WTC11 (cell line): ENCODE measurements at regions of chr1 and their contacts with region 1.

Region 1: GRCh38 chr1:203117611-203118575 is 9.6 kb upstream of the ADORA1 start:
- DNase-seq: peak; percentile 95
- ATAC-seq: peak; percentile 100
- H3K4me3 Mint-ChIP-seq: peak overlapping the region; percentile 47
- H3K27ac Mint-ChIP-seq: no peak overlapping the region
- H3K4me1 Mint-ChIP-seq: no peaks in the 10 kb centered on the region; the same call in 1 of the 2 replicates
- H3K27me3 Mint-ChIP-seq: peaks cover 17% of the 10 kb centered on the region
- CTCF ChIP-seq: peak; percentile 66

Region 2: GRCh38 chr1:203026031-203026989 is 91.6 kb before region 1 on chr1 and contains the start of gene PPFIA4:
- CTCF ChIA-PET with region 1: interaction called, 10 read pairs
- POLR2A ChIA-PET with region 1: no interaction called
- DNase-seq: peak; percentile 88
- ATAC-seq: peak; percentile 82
- H3K4me3 Mint-ChIP-seq: peak within 1 kb of the TSS; percentile 77
- H3K27ac Mint-ChIP-seq: no peak within 1 kb of the TSS
- H3K4me1 Mint-ChIP-seq: peaks cover 15% of the 10 kb centered on the region
- H3K27me3 Mint-ChIP-seq: peaks cover 29% of the 10 kb centered on the region
- CTCF ChIP-seq: no peak
- total RNA-seq, gene PPFIA4: 21.1 to 24.9 TPM (median 22.7 TPM) in 3 replicates

Region 3: GRCh38 chr1:203084588-203085502 is 33.0 kb before region 1 on chr1:
- CTCF ChIA-PET with region 1: interaction called, 60 read pairs
- POLR2A ChIA-PET with region 1: no interaction called
- DNase-seq: peak; percentile 84
- ATAC-seq: peak; percentile 59
- H3K4me3 Mint-ChIP-seq: no peak overlapping the region
- H3K27ac Mint-ChIP-seq: no peak overlapping the region
- H3K4me1 Mint-ChIP-seq: peaks cover 34% of the 10 kb centered on the region
- H3K27me3 Mint-ChIP-seq: no peaks in the 10 kb centered on the region; the same call in 1 of the 2 replicates
- CTCF ChIP-seq: peak; percentile 88

Region 4: GRCh38 chr1:203148125-203148524 is 30.2 kb after region 1 on chr1:
- CTCF ChIA-PET with region 1: interaction called, 37 read pairs
- POLR2A ChIA-PET with region 1: no interaction called
- DNase-seq: peak; percentile 44
- ATAC-seq: peak; percentile 50
- H3K4me3 Mint-ChIP-seq: no peak overlapping the region
- H3K27ac Mint-ChIP-seq: no peak overlapping the region
- H3K4me1 Mint-ChIP-seq: peaks cover 87% of the 10 kb centered on the region
- H3K27me3 Mint-ChIP-seq: no peaks in the 10 kb centered on the region
- CTCF ChIP-seq: no peak

Region 5: DNA sequence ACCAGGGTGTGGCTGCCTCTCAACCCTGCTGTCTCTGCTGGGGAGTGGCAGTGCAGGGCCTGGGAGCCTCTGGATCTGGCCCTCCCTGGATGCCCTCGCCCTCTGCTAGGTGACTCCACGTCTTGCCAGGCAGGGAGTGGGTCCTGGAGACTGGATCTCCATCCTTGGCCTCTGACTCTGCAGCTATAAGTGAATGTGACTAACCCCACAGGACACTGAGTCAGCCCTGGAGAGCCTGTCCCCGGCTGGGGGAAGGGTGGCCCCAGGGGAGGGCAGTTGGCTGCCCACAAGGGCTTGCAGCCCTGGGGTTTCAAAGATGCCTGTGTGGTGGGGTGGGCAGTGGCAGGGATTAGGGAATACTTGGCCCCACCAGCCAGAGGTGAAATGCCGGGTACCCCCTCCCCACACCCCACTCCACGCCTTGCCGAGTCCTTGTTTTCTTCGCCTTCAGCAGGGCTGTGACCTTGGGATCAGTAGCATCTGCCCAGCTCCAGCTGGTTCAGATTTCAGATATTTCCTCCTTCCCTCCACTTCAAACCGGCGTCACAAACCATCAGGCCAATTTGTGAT is 59.7 kb after region 1 on chr1:
- CTCF ChIA-PET with region 1: interaction called, 110 read pairs
- POLR2A ChIA-PET with region 1: no interaction called
- DNase-seq: no peak
- ATAC-seq: no peak
- H3K4me3 Mint-ChIP-seq: no peak overlapping the region
- H3K27ac Mint-ChIP-seq: no peak overlapping the region
- H3K4me1 Mint-ChIP-seq: peaks cover 21% of the 10 kb centered on the region
- H3K27me3 Mint-ChIP-seq: no peaks in the 10 kb centered on the region
- CTCF ChIP-seq: no peak

Region 6: GRCh38 chr1:203273206-203273868 is 155.4 kb after region 1 on chr1:
- CTCF ChIA-PET with region 1: interaction called, 146 read pairs
- POLR2A ChIA-PET with region 1: interaction called, 3 read pairs
- DNase-seq: peak; percentile 90
- ATAC-seq: peak; percentile 70
- H3K4me3 Mint-ChIP-seq: peak overlapping the region; percentile 59
- H3K27ac Mint-ChIP-seq: no peak overlapping the region
- H3K4me1 Mint-ChIP-seq: peaks cover 13% of the 10 kb centered on the region
- H3K27me3 Mint-ChIP-seq: peaks cover 47% of the 10 kb centered on the region
- CTCF ChIP-seq: peak; percentile 97